Endothelial cell of umbilical vein (primary cell): ENCODE measurements at regions of chr1 and their contacts with region 1.

Region 1: GRCh38 chr1:176073524-176074157 is 133.4 kb downstream of the COP1 start:
- DNase-seq: peak; percentile 78
- H3K4me3 ChIP-seq: no peak overlapping the region
- H3K27ac ChIP-seq: no peak overlapping the region
- H3K4me1 ChIP-seq: no peaks in the 10 kb centered on the region
- H3K27me3 ChIP-seq: no peaks in the 10 kb centered on the region
- CTCF ChIP-seq: peak; percentile 52 to 56
- POLR2A ChIP-seq: no peak

Region 2: DNA sequence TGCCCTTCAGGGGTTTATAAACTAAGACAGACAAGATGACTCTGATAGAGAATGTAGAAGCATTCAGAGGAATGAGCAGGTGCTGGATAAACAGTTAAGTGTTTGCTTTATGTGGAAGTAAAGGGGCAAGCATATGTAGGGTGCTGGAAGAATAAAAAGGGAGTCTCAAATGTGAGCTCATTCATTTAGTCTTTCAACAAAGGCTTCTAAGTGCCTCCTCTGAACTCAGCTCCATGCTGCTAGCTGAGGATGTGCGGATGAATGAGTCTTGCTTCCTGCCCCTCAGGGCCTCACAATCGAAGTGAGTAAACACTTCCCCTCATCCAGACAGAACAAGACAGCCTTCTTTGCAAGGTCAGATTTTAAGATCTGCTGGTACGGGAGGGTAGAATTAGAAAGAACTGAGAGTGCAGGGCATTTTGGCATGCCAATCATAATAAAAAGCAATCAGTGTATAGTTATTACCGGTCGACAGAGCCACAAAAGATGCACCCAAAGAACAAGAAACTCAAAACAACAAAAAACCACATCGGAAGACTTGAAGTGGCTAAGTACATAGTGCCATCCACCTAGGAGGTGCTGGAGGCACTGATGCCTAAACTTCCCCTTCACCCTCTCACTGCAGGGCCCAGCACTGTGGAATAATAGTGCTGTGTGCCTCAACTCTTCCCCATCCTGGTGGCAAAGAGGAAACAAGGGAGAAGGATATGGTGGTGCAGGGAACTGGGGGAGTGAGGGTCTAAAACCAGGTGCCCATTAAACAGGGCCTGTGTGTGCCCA is 400.1 kb before region 1 on chr1:
- CTCF ChIA-PET with region 1: no interaction called
- POLR2A ChIA-PET with region 1: no interaction called
- dilution Hi-C with region 1: no loop called
- intact Hi-C with region 1: loop called (anchors 5 kb)
- DNase-seq: peak; percentile 82
- H3K4me3 ChIP-seq: no peak overlapping the region
- H3K27ac ChIP-seq: peak overlapping the region; percentile 69
- H3K4me1 ChIP-seq: peaks cover 25% of the 10 kb centered on the region
- H3K27me3 ChIP-seq: no peaks in the 10 kb centered on the region
- CTCF ChIP-seq: no peak
- POLR2A ChIP-seq: no peak

Region 3: DNA sequence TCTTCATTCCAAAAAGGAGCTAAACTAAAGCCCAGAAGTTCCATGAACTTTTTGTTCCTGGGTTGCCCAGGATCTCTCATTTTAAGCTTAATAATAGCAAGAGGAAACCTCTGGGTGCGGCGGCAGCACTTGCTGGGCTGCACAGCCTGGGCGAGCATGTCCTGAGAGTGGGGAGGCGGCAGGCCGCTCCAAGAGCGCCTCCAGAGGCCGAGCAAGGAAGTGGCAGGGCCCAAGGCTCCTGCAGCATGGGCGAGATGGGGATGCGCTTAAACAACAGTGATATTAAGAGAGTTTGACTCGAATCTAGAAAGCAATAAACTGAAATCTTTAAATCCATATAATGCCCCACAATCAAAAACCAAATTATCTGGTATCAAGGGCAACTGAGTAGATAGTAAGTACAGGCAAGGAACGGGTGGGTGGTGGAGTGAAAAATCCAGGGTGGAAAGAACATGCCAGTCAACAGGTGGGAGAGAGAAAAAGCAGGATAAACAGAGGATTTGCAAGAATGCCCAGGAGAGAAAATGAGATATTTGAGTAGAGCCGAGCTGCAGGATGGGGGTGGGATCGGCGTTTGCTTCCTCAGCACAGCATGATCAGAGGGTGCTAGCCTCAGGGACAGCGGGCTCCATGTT is 316.1 kb before region 1 on chr1:
- CTCF ChIA-PET with region 1: no interaction called
- POLR2A ChIA-PET with region 1: no interaction called
- dilution Hi-C with region 1: no loop called
- intact Hi-C with region 1: loop called (anchors 2 kb)
- DNase-seq: peak; percentile 35
- H3K4me3 ChIP-seq: no peak overlapping the region
- H3K27ac ChIP-seq: no peak overlapping the region
- H3K4me1 ChIP-seq: no peaks in the 10 kb centered on the region
- H3K27me3 ChIP-seq: peaks cover 0 to 7% of the 10 kb centered on the region in 2 experiments
- CTCF ChIP-seq: peak; percentile 95
- POLR2A ChIP-seq: no peak

Region 4: DNA sequence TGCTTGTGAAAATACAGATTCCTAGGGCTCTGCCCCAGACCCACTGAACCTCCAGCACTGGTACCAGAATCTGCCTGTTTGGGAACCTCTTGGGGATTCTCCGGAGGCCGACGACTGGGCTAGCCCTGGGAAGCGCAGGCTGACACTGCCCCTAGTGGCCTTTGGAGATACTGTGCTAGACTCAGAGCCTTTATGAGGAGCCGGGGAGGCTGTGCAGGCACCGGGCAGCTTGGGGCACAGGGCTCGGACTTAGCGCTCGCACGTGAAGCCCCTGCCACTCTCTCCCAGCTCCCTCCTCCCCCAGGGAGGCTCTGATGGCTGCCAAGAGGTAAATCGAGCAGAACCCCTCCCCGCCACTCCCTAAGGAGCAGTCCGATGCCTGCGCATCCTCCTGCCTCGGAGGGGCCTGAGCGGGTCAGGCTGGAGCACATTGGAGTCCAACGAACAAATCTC is 185.6 kb before region 1 on chr1:
- CTCF ChIA-PET with region 1: no interaction called
- POLR2A ChIA-PET with region 1: no interaction called
- dilution Hi-C with region 1: no loop called
- intact Hi-C with region 1: loop called (anchors 1 kb)
- DNase-seq: peak; percentile 44
- H3K4me3 ChIP-seq: no peak overlapping the region
- H3K27ac ChIP-seq: no peak overlapping the region
- H3K4me1 ChIP-seq: no peaks in the 10 kb centered on the region
- H3K27me3 ChIP-seq: peaks cover 0 to 2% of the 10 kb centered on the region in 2 experiments
- CTCF ChIP-seq: peak; percentile 81 to 96
- POLR2A ChIP-seq: no peak

Region 5: GRCh38 chr1:176000258-176000657 is 73.4 kb before region 1 on chr1:
- CTCF ChIA-PET with region 1: no interaction called
- POLR2A ChIA-PET with region 1: no interaction called
- dilution Hi-C with region 1: no loop called
- intact Hi-C with region 1: no loop called
- DNase-seq: no peak
- H3K4me3 ChIP-seq: no peak overlapping the region
- H3K27ac ChIP-seq: no peak overlapping the region
- H3K4me1 ChIP-seq: no peaks in the 10 kb centered on the region
- H3K27me3 ChIP-seq: no peaks in the 10 kb centered on the region
- CTCF ChIP-seq: no peak
- POLR2A ChIP-seq: no peak

Region 6: GRCh38 chr1:176263278-176263677 is 189.6 kb after region 1 on chr1:
- CTCF ChIA-PET with region 1: no interaction called
- POLR2A ChIA-PET with region 1: no interaction called
- dilution Hi-C with region 1: no loop called
- intact Hi-C with region 1: no loop called
- DNase-seq: no peak
- H3K4me3 ChIP-seq: no peak overlapping the region
- H3K27ac ChIP-seq: no peak overlapping the region
- H3K4me1 ChIP-seq: no peaks in the 10 kb centered on the region
- H3K27me3 ChIP-seq: no peaks in the 10 kb centered on the region
- CTCF ChIP-seq: no peak
- POLR2A ChIP-seq: no peak